PC-9 (cell line): ENCODE measurements at regions of chr3 and their contacts with region 1.

Region 1: GRCh38 chr3:113844622-113845222 is 6.1 kb downstream of the GRAMD1C start:
- DNase-seq: peak in 1 of 2 experiments; percentile 42
- H3K4me3 ChIP-seq: no peak overlapping the region
- H3K27ac ChIP-seq: no peak overlapping the region
- H3K4me1 ChIP-seq: peaks cover 23% of the 10 kb centered on the region
- H3K27me3 ChIP-seq: no peaks in the 10 kb centered on the region
- CTCF ChIP-seq: peak; percentile 68

Region 2: DNA sequence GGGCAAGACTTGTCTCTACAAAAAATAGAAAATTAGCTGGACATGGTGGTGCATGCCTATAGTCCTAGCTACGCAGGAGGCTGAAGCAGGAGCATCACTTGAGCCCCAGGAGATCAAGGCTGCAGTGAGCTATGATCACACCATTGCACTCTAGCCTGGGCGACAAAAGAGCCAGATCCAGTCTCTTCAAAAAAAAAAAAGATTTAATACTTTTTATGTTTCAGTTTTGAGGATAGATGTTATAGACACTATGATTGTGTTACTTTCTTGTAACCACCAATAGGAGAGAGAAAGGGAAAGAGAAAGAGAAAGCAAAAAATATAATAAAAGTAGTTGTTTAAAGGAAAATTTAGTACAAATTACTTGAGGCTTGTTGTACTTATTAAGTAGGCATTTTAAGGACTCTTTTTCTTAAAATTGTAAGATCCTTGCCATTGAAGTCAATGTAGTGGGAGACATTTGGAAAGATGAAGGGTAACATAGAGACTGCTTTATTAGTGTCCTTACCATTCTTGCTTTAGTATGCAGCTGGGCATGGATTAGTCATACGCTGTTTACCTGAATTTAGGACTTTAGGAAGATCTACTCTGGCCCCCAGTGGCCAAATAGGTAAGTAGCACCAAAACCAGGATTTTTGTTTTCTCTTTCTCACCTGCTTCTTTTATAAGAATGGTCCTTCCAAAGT is 68.0 kb after region 1 on chr3:
- CTCF ChIA-PET with region 1: interaction called, 18 read pairs
- POLR2A ChIA-PET with region 1: no interaction called
- intact Hi-C with region 1: loop called (anchors 1 kb)
- DNase-seq: peak; percentile 48 to 77
- H3K4me3 ChIP-seq: no peak overlapping the region
- H3K27ac ChIP-seq: no peak overlapping the region
- H3K4me1 ChIP-seq: peaks cover 4% of the 10 kb centered on the region; the same call in 1 of the 2 replicates
- H3K27me3 ChIP-seq: no peaks in the 10 kb centered on the region
- CTCF ChIP-seq: peak; percentile 84